ENCODE measurements at regions of chr9 and their contacts with region 1.

Region 1: GRCh38 chr9:137411671-137412380 is 11.1 kb downstream of the EXD3 start:
- DNase-seq: peak; percentile 86
- H3K4me3 Mint-ChIP-seq: peak overlapping the region; percentile 49
- H3K27ac Mint-ChIP-seq: no peak overlapping the region
- H3K4me1 Mint-ChIP-seq: no peaks in the 10 kb centered on the region
- H3K27me3 Mint-ChIP-seq: no peaks in the 10 kb centered on the region
- CTCF ChIP-seq: no peak

Region 2: GRCh38 chr9:137295238-137295811 is 116.5 kb before region 1 on chr9:
- CTCF ChIA-PET with region 1: no interaction called
- intact Hi-C with region 1: loop called (anchors 10 kb)
- DNase-seq: peak; percentile 71
- H3K4me3 Mint-ChIP-seq: no peak overlapping the region
- H3K27ac Mint-ChIP-seq: no peak overlapping the region
- H3K4me1 Mint-ChIP-seq: peaks cover 27% of the 10 kb centered on the region
- H3K27me3 Mint-ChIP-seq: no peaks in the 10 kb centered on the region
- CTCF ChIP-seq: peak; percentile 20

Measured in Calu3 (cell line).